Caco-2 (cell line): ENCODE measurements at regions of chr4 and their contacts with region 1.

Region 1: GRCh38 chr4:6709230-6710114 is at the start of gene MRFAP1L1:
- DNase-seq: peak; percentile 97
- H3K4me3 ChIP-seq: peak within 1 kb of the TSS; percentile 58
- H3K4me3 Mint-ChIP-seq: peak within 1 kb of the TSS; percentile 93
- H3K27ac Mint-ChIP-seq: peak within 1 kb of the TSS; percentile 97
- H3K4me1 ChIP-seq: peaks cover 9% of the 10 kb centered on the region
- H3K4me1 Mint-ChIP-seq: peaks cover 31% of the 10 kb centered on the region
- H3K27me3 ChIP-seq: no peaks in the 10 kb centered on the region
- H3K27me3 Mint-ChIP-seq: no peaks in the 10 kb centered on the region
- CTCF ChIP-seq: peak in 1 of 2 experiments; percentile 8
- total RNA-seq, gene MRFAP1L1: 46.4 and 47.5 TPM in 2 replicates

Region 2: DNA sequence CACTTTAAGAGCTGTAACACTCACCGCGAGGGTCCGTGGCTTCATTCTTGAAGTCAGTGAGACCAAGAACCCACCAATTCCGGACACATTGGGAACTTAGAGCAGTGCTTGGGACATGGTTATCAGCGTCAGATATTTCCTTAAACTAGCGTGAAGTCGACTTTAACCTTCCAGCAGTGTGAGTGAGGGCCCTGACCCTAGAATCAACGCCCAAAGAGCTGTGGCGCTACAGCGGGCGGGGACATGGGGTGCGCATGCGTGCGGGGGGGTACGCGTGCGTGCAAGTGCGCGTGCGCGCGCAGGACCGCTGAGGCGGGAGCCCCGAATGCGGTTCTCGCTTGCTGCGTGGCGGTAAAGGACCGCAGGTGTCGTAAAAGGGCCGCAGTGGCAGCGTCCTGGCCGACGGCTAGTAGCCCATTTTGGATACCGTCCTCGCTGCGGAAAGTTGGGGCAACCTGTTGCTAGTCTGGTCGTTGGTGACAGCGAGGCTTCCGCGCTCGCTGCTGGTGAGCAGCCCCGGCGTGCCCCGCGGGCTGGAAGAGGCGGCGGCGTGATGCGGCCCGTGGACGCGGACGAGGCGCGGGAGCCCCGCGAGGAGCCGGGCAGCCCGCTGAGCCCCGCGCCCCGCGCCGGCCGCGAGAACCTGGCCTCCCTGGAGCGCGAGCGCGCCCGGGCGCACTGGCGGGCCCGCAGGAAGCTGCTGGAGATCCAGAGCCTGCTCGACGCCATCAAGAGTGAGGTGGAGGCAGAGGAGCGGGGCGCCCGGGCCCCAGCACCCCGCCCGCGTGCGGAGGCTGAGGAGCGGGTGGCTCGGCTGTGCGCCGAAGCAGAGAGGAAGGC is 35.6 kb before region 1 on chr4:
- CTCF ChIA-PET with region 1: interaction called, 11 read pairs
- POLR2A ChIA-PET with region 1: interaction called, 4 read pairs
- intact Hi-C with region 1: no loop called
- DNase-seq: peak; percentile 94 to 95
- H3K4me3 ChIP-seq: peak overlapping the region; percentile 89
- H3K4me3 Mint-ChIP-seq: peak overlapping the region; percentile 84
- H3K27ac Mint-ChIP-seq: peak overlapping the region; percentile 93
- H3K4me1 ChIP-seq: peaks cover 16% of the 10 kb centered on the region
- H3K4me1 Mint-ChIP-seq: peaks cover 18% of the 10 kb centered on the region
- H3K27me3 ChIP-seq: no peaks in the 10 kb centered on the region
- H3K27me3 Mint-ChIP-seq: no peaks in the 10 kb centered on the region
- CTCF ChIP-seq: no peak

Region 3: DNA sequence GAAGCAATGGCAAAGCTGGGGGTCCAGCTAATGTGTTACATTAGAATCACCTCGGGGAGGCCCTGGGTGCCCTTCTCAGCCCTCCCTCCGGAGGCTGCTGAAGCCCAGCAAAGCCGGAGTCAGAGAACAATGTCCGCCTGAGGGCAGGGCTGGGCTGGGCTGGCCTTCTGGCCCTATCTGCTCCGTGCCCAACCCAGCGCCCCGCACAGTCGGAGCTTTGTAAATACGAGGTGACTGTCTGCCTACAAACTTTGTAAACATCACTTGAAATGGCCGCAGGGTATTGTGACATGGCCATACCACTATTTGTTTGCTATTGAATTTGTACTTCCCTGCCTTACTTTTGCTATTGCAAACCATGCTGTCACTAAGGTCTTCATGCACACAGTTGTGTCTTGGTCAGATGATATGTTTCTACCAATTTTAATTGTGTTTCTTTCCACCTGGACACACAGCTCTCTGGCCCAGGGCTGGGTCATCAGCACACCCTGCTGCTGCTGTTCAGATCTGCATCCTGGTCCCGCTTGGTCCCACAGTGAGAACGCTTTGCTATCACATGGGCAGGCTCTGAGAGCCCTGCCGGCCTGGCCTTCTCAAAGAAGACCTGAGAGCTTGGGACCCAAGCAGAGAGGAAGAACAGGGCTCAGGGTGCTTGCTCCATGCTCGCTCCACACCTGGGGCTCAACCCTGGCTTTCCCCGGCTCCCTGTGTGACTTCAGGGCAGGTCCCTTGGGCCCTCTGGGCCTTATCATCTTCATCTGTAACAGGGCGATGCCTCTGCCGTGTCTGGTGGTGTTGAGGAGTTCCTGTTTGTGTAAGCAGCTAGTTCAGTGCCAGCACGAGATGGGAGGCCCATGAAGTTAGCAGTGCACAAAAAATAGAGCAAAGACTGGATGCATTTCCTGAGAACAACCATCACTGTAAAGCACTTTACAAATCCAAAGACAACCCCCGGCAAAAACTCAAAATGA is 13.5 kb before region 1 on chr4:
- CTCF ChIA-PET with region 1: interaction called, 5 read pairs
- POLR2A ChIA-PET with region 1: no interaction called
- intact Hi-C with region 1: loop called (anchors 2 kb)
- DNase-seq: peak; percentile 92 to 94
- H3K4me3 ChIP-seq: no peak overlapping the region
- H3K4me3 Mint-ChIP-seq: peak overlapping the region; percentile 77
- H3K27ac Mint-ChIP-seq: peak overlapping the region; percentile 92
- H3K4me1 ChIP-seq: peaks cover 40% of the 10 kb centered on the region
- H3K4me1 Mint-ChIP-seq: peaks cover 42% of the 10 kb centered on the region
- H3K27me3 ChIP-seq: no peaks in the 10 kb centered on the region
- H3K27me3 Mint-ChIP-seq: no peaks in the 10 kb centered on the region
- CTCF ChIP-seq: peak in 1 of 2 experiments; percentile 18

Region 4: DNA sequence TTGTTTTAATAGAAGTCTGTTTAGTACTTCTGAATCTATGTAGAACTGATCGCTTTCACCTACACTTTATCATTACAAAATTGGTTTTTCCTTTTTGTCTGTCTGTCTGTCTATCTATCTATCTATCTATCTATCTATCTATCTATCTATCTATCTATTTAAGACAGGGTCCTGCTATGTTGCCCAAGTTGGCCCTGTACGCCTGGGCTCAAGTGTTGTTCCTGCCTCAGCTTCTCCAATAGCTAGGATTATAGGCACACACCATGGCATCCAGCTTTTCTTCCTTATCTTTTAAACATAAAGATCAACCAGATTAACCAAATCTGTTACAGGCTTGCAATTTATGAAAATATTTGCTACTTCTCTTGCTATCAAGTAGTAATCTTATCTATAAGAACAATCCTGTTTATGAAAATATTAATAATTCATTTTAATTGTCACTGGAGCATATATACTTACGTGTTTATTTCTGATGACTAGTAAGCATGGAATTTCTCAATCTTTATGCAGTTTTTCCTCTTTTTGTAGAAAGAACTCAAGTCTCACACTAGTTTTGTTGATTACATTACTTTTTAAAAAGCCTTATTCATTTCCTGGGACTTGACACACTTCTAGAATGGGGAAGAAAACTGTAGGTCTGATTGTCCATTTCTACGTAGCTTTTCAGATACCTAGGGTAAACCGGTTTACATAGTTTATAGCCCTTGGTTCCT is 97.6 kb after region 1 on chr4:
- CTCF ChIA-PET with region 1: no interaction called
- POLR2A ChIA-PET with region 1: no interaction called
- intact Hi-C with region 1: no loop called
- DNase-seq: no peak
- H3K4me3 ChIP-seq: no peak overlapping the region
- H3K4me3 Mint-ChIP-seq: no peak overlapping the region
- H3K27ac Mint-ChIP-seq: peak overlapping the region; percentile 38
- H3K4me1 ChIP-seq: peaks cover 2% of the 10 kb centered on the region; the same call in 1 of the 2 replicates
- H3K4me1 Mint-ChIP-seq: peaks cover 27% of the 10 kb centered on the region
- H3K27me3 ChIP-seq: no peaks in the 10 kb centered on the region
- H3K27me3 Mint-ChIP-seq: no peaks in the 10 kb centered on the region
- CTCF ChIP-seq: no peak

Region 5: GRCh38 chr4:6840062-6840976 is 130.8 kb after region 1 on chr4:
- CTCF ChIA-PET with region 1: interaction called, 13 read pairs
- POLR2A ChIA-PET with region 1: no interaction called
- intact Hi-C with region 1: no loop called
- DNase-seq: peak; percentile 54 to 74
- H3K4me3 ChIP-seq: no peak overlapping the region
- H3K4me3 Mint-ChIP-seq: no peak overlapping the region
- H3K27ac Mint-ChIP-seq: peak overlapping the region; percentile 30
- H3K4me1 ChIP-seq: peaks cover 17% of the 10 kb centered on the region
- H3K4me1 Mint-ChIP-seq: peaks cover 16% of the 10 kb centered on the region
- H3K27me3 ChIP-seq: no peaks in the 10 kb centered on the region
- H3K27me3 Mint-ChIP-seq: no peaks in the 10 kb centered on the region
- CTCF ChIP-seq: no peak

Region 6: DNA sequence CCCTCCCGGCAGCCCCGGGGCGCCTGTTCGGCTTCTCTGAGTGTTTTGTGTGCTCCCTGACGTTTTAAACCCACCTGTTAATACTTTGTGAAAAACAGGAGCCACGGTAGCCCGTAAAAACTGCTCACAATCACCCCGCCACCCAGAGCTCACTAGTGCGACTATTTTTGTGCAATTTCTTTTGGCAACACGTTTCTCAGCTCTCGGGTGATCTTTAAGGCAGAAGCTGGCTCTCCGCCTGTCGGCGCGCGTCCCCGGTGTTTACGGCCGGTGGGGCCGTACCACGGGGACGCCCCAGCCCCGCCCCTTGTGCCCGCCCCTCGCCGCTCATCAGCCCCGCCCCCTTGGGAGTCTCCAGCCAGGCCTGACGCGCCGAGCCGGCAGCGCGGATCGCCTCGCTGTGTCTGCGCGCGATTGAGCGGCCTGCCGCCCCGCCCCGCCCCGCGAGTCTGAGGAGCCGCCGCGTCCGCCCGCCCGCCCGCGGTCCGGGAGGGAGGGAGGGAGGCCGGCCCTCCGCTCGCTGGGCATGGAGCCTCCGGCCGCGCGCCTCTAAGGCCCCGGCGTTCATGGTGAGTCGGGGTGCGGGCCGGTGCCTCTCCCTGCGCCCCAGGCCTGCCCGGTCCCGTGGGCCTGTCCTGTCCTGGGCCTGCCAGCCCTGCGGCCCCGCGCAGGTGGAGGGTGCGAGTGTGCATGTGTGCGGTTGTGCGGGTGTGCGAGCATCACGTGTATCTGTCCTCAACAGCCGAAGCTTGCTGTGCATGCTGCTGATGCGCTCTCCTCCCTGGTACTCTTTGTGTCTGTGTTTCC is 277.5 kb after region 1 on chr4:
- CTCF ChIA-PET with region 1: no interaction called
- POLR2A ChIA-PET with region 1: no interaction called
- intact Hi-C with region 1: loop called (anchors 10 kb)
- DNase-seq: peak; percentile 92 to 96
- H3K4me3 ChIP-seq: peak overlapping the region; percentile 91
- H3K4me3 Mint-ChIP-seq: peak overlapping the region; percentile 84
- H3K27ac Mint-ChIP-seq: peak overlapping the region; percentile 79
- H3K4me1 ChIP-seq: peaks cover 29% of the 10 kb centered on the region
- H3K4me1 Mint-ChIP-seq: peaks cover 30% of the 10 kb centered on the region
- H3K27me3 ChIP-seq: no peaks in the 10 kb centered on the region
- H3K27me3 Mint-ChIP-seq: no peaks in the 10 kb centered on the region
- CTCF ChIP-seq: peak in 1 of 2 experiments; percentile 6

Region 7: DNA sequence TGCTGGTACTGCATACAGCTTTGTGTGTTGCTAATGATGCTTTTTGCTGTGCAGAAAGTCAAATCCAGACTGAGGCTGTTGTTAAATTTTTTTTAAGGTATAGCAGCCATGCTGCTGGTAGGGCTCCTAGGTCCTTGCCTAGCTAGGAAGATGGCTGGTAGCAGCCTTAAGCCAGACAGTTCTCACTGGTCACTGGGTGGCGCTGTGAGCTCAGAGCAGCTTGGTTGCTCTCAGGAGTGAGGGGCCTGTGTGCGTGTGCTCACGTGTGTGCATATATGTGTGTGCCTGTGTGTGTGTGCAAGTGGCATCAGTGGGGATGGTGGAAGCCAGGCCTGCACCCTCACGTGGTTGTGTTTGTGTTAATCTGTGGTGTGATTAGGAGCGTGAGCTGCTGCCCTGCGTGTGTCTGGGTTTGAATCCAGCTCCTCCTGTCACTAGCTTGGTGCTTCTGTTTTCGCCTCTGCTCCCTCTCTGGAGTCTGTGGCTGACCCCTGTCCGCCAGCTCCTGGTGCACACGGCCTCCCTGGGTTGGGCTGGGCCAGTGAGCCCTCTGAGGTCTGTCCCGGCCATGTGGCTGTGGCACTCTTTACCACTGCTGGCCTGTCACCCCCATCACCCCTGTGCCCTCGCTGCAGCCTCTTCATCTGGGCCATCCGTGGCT is 529.0 kb after region 1 on chr4:
- CTCF ChIA-PET with region 1: no interaction called
- POLR2A ChIA-PET with region 1: no interaction called
- intact Hi-C with region 1: no loop called
- DNase-seq: no peak
- H3K4me3 ChIP-seq: no peak overlapping the region
- H3K4me3 Mint-ChIP-seq: no peak overlapping the region
- H3K27ac Mint-ChIP-seq: no peak overlapping the region
- H3K4me1 ChIP-seq: no peaks in the 10 kb centered on the region
- H3K4me1 Mint-ChIP-seq: no peaks in the 10 kb centered on the region
- H3K27me3 ChIP-seq: no peaks in the 10 kb centered on the region
- H3K27me3 Mint-ChIP-seq: no peaks in the 10 kb centered on the region
- CTCF ChIP-seq: peak in 1 of 2 experiments; percentile 17